ENCODE measurements at regions of chr13 and their contacts with region 1.

Region 1: DNA sequence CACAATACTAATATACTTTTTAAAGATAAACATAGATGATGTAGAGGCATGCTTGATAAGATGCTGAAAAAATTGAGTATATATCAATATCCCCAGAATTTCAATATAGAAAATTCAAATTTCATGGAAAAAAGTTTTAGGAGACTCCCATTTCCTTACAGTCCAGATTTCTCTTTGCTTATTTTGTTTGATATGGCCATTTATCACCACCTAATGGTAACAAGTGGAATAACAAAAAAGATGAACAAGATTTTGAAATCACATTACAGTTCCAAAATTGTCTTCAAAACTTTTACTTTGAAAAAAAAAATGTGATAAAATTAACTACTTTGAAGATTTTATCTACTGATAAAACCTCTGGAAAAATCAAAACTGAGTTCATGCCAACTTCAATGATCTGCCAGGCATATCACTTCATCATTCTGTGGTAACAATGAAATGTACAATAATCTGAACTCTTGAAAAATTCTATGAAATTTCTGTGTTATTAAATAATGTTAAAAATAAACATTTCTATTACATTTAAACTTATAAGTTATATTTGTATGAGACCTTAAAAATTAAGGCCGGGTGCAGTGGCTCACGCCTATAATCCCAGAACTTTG is 17.5 kb downstream of the MIPEP start:
- DNase-seq: no peak
- ATAC-seq: peak; percentile 17 to 21

Region 2: DNA sequence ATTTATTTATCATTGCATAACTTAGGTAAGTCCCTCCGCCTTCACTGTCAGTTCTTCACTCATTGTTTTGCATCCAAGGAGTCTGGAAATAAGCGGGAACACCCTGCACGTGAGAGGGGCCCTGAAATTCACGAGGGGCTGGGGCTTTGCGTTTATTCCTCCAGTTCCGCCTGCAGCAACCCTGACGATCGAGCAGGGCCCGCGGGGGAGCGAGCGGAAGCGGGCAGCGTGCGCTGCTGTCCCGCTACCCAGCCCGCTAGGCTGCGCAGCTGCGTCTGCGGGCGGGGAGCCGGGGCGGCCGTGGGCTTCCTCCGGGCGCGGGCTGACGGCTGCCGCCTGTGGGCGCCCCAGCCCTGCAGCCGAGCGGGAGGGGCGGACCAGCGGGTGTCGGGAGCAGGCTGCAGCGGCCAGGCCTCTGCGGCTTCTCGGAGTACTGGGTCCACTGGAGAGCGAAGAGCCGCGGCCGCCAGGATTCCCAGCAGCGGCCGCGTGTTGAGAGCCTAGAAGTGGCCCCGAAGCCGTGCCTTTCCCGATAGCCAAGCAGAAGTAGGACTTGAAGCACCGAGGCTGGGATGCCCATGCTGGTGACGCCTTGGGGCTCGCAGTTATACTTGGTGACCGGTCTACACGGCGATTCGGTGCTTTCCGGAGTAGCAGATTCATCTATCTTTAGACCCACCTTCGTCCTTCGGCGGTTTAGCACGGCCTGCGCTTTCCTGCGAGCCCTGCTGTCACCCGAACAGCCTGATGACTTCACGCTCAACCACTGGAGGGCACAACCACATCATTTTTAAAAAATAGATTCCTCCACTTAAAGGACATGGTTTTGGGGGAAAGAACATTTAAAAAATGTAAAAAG is 405.3 kb before region 1 on chr13:
- intact Hi-C with region 1: loop called (anchors 2 to 5 kb)
- DNase-seq: peak; percentile 77
- ATAC-seq: peak; percentile 94 to 96

Region 3: DNA sequence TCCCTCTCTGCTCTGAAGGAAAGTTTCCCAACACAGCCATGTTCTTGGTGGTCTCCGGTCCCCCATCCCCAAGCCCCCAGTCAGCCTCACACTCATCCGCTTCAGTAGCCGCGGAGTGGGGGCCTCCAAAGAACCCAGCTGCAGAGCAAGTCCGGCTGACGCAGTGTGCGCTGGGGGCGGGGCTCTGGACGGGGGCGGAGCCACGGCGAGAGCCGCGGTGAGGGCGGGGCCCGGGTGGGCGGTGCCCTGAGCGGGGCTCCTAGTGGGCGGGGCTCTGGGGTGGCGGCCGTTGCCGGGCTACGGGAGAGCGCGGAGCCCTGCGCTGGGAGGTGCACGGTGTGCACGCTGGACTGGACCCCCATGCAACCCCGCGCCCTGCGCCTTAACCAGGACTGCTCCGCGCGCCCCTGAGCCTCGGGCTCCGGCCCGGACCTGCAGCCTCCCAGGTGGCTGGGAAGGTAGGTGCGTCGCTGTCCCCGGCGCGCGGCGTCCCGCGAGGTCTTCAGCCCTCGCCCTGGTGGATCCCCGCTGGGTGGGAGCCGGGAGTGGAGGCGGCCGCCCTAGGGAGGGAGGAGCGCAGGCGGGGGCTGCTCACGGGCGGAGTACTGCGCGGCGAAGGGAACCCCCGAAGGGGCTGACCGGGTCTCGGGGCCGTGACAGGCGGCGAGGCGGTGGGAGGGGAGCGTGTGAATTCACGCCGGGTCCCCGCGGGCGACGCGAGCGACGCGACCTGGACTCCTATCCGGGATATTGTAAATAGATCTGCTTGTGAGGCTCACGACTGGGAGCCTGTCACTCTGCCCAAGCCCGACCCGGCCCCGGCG is 292.4 kb before region 1 on chr13:
- intact Hi-C with region 1: loop called in 1 of 2 experiments (anchors 10 kb)
- DNase-seq: peak; percentile 93
- ATAC-seq: peak; percentile 99

Region 4: GRCh38 chr13:23715762-23716235 is 155.9 kb before region 1 on chr13:
- intact Hi-C with region 1: loop called (anchors 5 to 10 kb)
- DNase-seq: no peak
- ATAC-seq: peak; percentile 58 to 68

Region 5: GRCh38 chr13:23921451-23921888 is 49.8 kb after region 1 on chr13:
- intact Hi-C with region 1: no loop called
- DNase-seq: no peak
- ATAC-seq: peak in 1 of 2 donors; percentile 38

Measured in left cardiac atrium (tissue), 4 donors.